Left colon (tissue), 2 donors: ENCODE measurements at regions of chr18 and their contacts with region 1.

Region 1: DNA sequence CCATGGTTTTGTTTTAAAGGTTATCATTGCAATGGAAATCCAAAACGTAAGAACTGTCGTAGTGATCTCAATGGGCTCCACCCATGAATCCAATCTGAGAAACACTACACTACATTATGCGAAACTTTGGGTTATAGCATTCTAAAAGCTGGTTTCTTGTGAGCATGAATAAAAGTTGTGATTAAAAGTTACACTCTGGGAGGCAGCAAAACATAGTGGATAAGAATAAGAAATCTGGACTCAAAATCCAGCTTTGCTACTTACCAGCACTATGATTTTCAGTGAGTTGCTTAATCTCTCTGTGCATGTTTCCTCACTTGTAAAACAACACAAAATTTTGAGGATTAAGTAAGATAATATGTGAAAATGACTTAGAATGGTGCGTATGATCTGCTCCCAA is 25.7 kb upstream of the THOC1 start:
- DNase-seq: no peak
- ATAC-seq: no peak

Region 2: GRCh38 chr18:616380-616995 is 323.0 kb after region 1 on chr18:
- intact Hi-C with region 1: loop called (anchors 2 to 10 kb)
- DNase-seq: no peak
- ATAC-seq: peak; percentile 62